ENCODE measurements at regions of chr3 and their contacts with region 1.

Region 1: GRCh38 chr3:140972833-140973232 is 31.2 kb downstream of the SLC25A36 start:
- DNase-seq: peak; percentile 17
- H3K4me3 ChIP-seq: no peak overlapping the region
- H3K27ac ChIP-seq: no peak overlapping the region
- H3K4me1 ChIP-seq: no peaks in the 10 kb centered on the region
- H3K27me3 ChIP-seq: no peaks in the 10 kb centered on the region
- CTCF ChIP-seq: peak; percentile 31 to 41

Region 2: GRCh38 chr3:140898340-140899180 is 74.3 kb before region 1 on chr3:
- CTCF ChIA-PET with region 1: no interaction called
- dilution Hi-C with region 1: no loop called
- in situ Hi-C with region 1: no loop called
- intact Hi-C with region 1: loop called (anchors 2 kb)
- DNase-seq: peak; percentile 75
- H3K4me3 ChIP-seq: no peak overlapping the region
- H3K27ac ChIP-seq: no peak overlapping the region
- H3K4me1 ChIP-seq: peaks cover 3% of the 10 kb centered on the region
- H3K27me3 ChIP-seq: peaks cover 2% of the 10 kb centered on the region
- CTCF ChIP-seq: peak; percentile 64 to 68

Region 3: DNA sequence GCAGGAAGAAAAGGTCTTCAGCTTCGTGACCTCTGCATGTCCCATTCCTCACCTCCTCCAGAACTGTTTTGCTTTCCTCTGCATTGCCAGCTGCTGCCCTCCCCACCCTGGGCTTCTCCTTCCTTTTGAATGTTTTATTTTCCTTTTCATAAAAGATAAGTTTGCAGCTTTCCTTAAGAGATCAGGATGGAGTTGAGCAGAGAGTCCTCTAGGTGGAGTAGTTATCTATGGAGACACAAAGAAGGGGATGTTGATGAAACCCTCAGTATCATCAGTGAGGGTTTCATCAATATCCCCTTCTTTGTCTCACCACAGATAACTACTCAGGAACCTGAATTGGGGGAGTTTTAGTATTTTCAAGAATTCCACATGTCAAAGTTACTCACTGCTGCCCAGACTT is 50.2 kb before region 1 on chr3:
- CTCF ChIA-PET with region 1: no interaction called
- dilution Hi-C with region 1: no loop called
- in situ Hi-C with region 1: no loop called
- intact Hi-C with region 1: loop called (anchors 1 kb)
- DNase-seq: no peak
- H3K4me3 ChIP-seq: no peak overlapping the region
- H3K27ac ChIP-seq: no peak overlapping the region
- H3K4me1 ChIP-seq: no peaks in the 10 kb centered on the region
- H3K27me3 ChIP-seq: peaks cover 2% of the 10 kb centered on the region
- CTCF ChIP-seq: peak; percentile 26 to 56

Region 4: DNA sequence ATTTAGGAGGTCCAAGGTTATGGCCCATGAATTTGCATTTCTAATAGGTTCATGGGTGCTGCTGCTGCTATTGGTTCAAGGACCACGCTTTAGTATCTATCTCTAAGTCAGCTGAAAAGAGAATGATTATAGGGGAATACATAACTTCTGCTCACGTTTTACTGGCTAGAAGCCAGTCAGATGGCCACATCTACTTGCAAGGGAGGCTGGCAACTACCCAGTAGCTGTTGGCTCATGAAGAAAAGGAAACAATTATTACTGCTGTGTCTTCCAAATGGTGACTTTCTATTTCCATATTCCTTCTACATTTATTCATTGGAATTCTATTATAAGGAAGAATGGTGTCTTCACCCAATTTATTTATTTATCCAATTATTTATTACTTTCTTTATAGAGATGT is 23.0 kb after region 1 on chr3:
- CTCF ChIA-PET with region 1: no interaction called
- dilution Hi-C with region 1: no loop called
- in situ Hi-C with region 1: no loop called
- intact Hi-C with region 1: no loop called
- DNase-seq: no peak
- H3K4me3 ChIP-seq: no peak overlapping the region
- H3K27ac ChIP-seq: no peak overlapping the region
- H3K4me1 ChIP-seq: no peaks in the 10 kb centered on the region
- H3K27me3 ChIP-seq: no peaks in the 10 kb centered on the region
- CTCF ChIP-seq: no peak

Region 5: DNA sequence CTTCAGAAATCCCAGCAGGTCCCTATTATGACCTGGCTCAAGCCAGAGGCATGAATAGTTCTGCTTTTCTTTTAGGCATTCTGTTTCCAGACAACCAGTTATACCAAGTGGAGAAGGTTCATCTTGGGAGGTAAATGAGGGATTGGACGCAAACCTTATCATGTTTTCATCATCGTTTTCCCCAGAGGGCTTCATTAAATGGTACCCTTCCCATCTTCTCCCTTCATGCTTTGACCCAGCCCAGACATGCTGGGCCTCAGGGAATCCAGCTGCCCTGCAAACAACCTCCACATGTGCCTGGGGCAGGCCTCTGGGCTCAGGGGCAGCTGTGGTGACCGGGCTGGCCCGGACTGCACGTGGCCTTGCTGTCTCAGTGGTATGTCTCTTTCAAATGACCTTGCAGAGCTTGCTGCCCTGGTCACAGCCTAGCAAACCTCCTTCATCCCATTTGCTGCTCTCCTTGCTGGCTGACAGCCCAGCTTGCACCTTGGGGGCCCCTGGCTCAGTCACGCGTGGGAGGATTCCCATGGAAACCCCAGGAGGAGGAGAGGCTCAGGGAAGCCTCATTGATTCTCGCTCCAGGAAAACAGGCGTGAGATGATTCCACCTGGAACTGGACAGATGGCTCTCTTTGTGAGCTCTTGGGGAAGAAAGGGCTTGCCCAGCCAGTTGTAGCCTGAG is 83.8 kb after region 1 on chr3:
- CTCF ChIA-PET with region 1: no interaction called
- dilution Hi-C with region 1: no loop called
- in situ Hi-C with region 1: no loop called
- intact Hi-C with region 1: no loop called
- DNase-seq: no peak
- H3K4me3 ChIP-seq: no peak overlapping the region
- H3K27ac ChIP-seq: no peak overlapping the region
- H3K4me1 ChIP-seq: peaks cover 9% of the 10 kb centered on the region
- H3K27me3 ChIP-seq: peaks cover 20% of the 10 kb centered on the region
- CTCF ChIP-seq: no peak

Measured in mammary epithelial cell (primary cell).